Dorsolateral prefrontal cortex (tissue), 120 donors: ENCODE measurements at regions of chr10 and their contacts with region 1.

Region 1: GRCh38 chr10:6678211-6678803 is 98.2 kb upstream of the PRKCQ start:
- DNase-seq: peak in 7 of 10 donors; percentile 8 to 56 (median 40)
- H3K4me3 ChIP-seq: peak overlapping the region in 1 of 59 donors; percentile 10
- H3K27ac ChIP-seq: no peak overlapping the region
- H3K27me3 ChIP-seq: peaks cover 0 to 5% (median 0%) of the 10 kb centered on the region in 45 donors
- CTCF ChIP-seq: peak; percentile 37 to 82 (median 66)

Region 2: DNA sequence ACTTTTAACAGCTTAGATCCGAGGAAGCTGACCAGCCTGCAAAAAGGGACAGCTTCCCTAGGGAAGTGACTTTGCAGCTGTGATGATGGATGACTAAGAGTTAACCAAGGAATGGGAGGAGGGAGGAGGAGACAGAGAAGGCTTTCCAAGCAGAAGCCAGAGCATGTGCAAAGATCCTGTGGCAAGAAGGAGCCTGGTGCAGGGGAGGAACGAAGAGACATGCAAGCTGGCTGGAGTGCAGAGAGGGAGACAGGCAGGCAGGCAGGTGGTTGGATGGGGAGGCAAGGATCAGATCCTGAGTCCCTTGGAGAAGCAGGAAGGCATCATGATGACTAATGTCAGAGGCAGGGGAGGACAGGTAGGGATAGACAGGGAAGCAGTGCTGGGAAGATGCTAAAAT is 326.8 kb before region 1 on chr10:
- intact Hi-C with region 1: no loop called
- DNase-seq: no peak
- H3K4me3 ChIP-seq: no peak overlapping the region
- H3K27ac ChIP-seq: no peak overlapping the region
- H3K27me3 ChIP-seq: no peaks in the 10 kb centered on the region
- CTCF ChIP-seq: no peak

Region 3: GRCh38 chr10:6823792-6824191 is 145.5 kb after region 1 on chr10:
- intact Hi-C with region 1: loop called in 1 of 2 experiments (anchors 5 kb)
- DNase-seq: no peak
- H3K4me3 ChIP-seq: no peak overlapping the region
- H3K27ac ChIP-seq: no peak overlapping the region
- H3K27me3 ChIP-seq: peaks cover 0 to 11% (median 0%) of the 10 kb centered on the region in 45 donors
- CTCF ChIP-seq: no peak